Right ventricle myocardium inferior (tissue), 1 donor: ENCODE measurements at regions of chr9 and their contacts with region 1.

Region 1: GRCh38 chr9:81552581-81552991 is 136.8 kb downstream of the TLE1 start:
- DNase-seq: no peak
- ATAC-seq: peak; percentile 46

Region 2: DNA sequence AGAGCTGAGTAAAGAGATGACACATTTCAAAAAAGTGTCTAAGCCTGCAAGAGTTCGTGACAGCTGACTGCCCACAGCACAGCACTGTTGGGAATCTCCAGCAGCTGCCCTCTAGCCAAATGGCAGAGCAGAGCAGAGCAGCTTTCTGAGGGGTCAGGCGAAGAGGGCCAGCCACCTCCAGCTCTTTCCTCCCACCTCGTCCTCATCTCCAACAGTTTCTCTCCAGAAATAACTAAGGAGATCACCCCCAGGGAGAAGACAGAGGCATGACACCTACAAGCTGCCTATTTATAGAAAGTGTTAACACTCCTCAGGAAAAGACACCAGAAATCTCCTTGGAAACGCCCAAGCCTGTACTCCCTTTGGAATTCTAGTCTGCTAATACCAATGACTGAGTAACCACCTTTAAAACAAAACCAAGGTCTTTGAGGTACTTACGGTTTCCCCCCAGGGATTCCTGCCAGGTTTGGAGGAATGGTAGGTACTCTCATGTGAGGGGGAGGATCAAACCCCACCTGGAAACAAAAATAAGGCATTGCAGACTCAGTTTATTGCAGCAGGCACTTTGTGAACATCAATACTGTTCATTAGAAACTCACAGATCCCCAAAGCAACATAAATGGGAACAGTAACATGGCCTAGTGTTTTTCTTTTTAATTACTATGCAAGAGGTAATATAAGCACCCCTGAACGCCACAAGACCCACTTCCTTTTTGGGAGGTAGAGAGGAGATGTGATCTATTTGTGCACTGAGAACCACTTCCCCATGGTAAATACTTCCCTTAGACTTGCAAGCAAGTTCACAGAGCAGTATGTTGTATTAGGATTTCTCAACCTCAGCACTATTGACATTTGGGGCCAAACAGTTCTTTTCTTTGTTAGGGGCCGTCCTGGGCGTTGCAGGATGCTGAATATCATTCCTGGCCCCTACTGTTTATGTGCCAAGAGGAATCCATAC is 57.5 kb after region 1 on chr9:
- intact Hi-C with region 1: loop called (anchors 5 kb)
- DNase-seq: no peak
- ATAC-seq: no peak